Activated CD4-positive, alpha-beta memory T cell treated with anti-CD3 and anti-CD28 coated beads for 36 hours (primary cell): ENCODE measurements at regions of chrX and their contacts with region 1.

Region 1: GRCh38 chrX:130772105-130772775 is 130.8 kb downstream of the ENOX2 start:
- DNase-seq: no peak
- H3K4me3 Mint-ChIP-seq: no peak overlapping the region
- H3K27ac Mint-ChIP-seq: no peak overlapping the region
- H3K4me1 Mint-ChIP-seq: peaks cover 7% of the 10 kb centered on the region
- H3K27me3 Mint-ChIP-seq: no peaks in the 10 kb centered on the region

Region 2: DNA sequence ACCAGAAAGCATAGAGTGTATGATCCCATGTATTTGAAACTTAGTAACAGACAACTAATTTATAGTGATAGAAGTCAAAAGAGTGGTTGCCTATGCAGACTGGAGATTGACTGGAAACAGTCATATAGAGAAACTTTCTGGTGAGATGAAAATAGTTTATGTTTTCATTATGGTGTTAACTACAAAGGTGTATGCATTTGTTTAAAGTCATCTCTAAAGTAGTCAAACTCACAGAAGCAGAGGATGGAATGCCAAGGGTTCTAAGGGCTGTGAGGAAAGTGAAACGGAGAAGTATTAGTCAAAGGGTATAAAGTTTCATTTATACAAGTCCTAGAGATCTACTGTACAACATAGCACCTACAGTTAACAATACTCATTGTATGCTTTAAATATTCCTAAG is 85.0 kb after region 1 on chrX:
- CTCF ChIA-PET with region 1: no interaction called
- POLR2A ChIA-PET with region 1: no interaction called
- intact Hi-C with region 1: loop called (anchors 5 kb)
- DNase-seq: no peak
- H3K4me3 Mint-ChIP-seq: no peak overlapping the region
- H3K27ac Mint-ChIP-seq: no peak overlapping the region
- H3K4me1 Mint-ChIP-seq: peaks cover 8% of the 10 kb centered on the region
- H3K27me3 Mint-ChIP-seq: no peaks in the 10 kb centered on the region

Region 3: GRCh38 chrX:131010186-131010585 is 237.9 kb after region 1 on chrX:
- CTCF ChIA-PET with region 1: no interaction called
- POLR2A ChIA-PET with region 1: no interaction called
- intact Hi-C with region 1: no loop called
- DNase-seq: no peak
- H3K4me3 Mint-ChIP-seq: no peak overlapping the region
- H3K27ac Mint-ChIP-seq: no peak overlapping the region
- H3K4me1 Mint-ChIP-seq: no peaks in the 10 kb centered on the region
- H3K27me3 Mint-ChIP-seq: peaks cover 5% of the 10 kb centered on the region